ENCODE measurements at regions of chr22 and their contacts with region 1.

Region 1: GRCh38 chr22:43001271-43002201 is 13.4 kb downstream of the PACSIN2 start:
- DNase-seq: peak; percentile 22
- H3K4me3 Mint-ChIP-seq: peak overlapping the region; percentile 26
- H3K27ac Mint-ChIP-seq: peak overlapping the region; percentile 62
- H3K4me1 Mint-ChIP-seq: peaks cover 77% of the 10 kb centered on the region
- H3K27me3 Mint-ChIP-seq: no peaks in the 10 kb centered on the region

Region 2: GRCh38 chr22:43014869-43015676 is 13.5 kb after region 1 on chr22 and contains the start of gene PACSIN2:
- CTCF ChIA-PET with region 1: interaction called, 8 read pairs
- POLR2A ChIA-PET with region 1: interaction called, 32 read pairs
- DNase-seq: peak; percentile 99
- H3K4me3 Mint-ChIP-seq: peak within 1 kb of the TSS; percentile 93
- H3K27ac Mint-ChIP-seq: peak within 1 kb of the TSS; percentile 69
- H3K4me1 Mint-ChIP-seq: peaks cover 24% of the 10 kb centered on the region
- H3K27me3 Mint-ChIP-seq: peaks cover 2% of the 10 kb centered on the region
- total RNA-seq, gene PACSIN2: 33.5 to 35.1 TPM

Measured in activated CD4-positive, alpha-beta memory T cell treated with anti-CD3 and anti-CD28 coated beads, Interleukin-2, amount 10 ng/mL, durations not matched to agents 7 days and 5 days (primary cell).